ENCODE measurements at regions of chr3 and their contacts with region 1.

Region 1: DNA sequence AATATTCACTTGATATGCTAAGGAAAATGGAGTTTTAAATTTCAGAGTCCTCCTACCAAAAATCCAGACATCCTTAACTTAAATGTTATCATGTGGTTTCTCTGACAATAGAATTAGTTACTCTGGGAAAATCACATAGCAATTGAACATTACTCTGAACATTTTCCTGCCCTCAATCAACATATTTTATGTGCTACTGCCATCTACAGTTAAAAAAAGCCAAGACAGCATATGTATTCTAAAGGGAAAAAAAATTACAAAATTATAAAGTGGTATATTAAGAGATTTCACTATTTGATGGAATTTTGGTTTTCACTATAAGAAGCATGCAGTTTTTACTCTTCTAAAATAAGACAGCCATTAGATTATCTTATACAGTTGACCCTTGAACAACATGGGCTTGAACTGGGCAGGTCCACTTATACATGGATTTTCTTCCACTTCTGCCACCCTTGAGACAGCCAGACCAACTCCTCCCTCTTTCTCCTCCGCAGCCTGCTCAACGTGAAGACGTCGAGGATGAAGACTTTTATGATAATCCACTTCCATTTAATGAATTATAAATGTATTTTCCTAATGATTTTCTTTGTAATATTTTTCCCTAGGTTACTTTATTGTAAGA is 122.3 kb downstream of the ATP1B3 start:
- DNase-seq: no peak
- H3K4me3 ChIP-seq: no peak overlapping the region
- H3K27ac ChIP-seq: no peak overlapping the region
- H3K4me1 ChIP-seq: peaks cover 2% of the 10 kb centered on the region
- H3K27me3 ChIP-seq: no peaks in the 10 kb centered on the region
- CTCF ChIP-seq: peak in 1 of 3 donors; percentile 17
- EP300 ChIP-seq: no peak
- POLR2A ChIP-seq: no peak

Region 2: DNA sequence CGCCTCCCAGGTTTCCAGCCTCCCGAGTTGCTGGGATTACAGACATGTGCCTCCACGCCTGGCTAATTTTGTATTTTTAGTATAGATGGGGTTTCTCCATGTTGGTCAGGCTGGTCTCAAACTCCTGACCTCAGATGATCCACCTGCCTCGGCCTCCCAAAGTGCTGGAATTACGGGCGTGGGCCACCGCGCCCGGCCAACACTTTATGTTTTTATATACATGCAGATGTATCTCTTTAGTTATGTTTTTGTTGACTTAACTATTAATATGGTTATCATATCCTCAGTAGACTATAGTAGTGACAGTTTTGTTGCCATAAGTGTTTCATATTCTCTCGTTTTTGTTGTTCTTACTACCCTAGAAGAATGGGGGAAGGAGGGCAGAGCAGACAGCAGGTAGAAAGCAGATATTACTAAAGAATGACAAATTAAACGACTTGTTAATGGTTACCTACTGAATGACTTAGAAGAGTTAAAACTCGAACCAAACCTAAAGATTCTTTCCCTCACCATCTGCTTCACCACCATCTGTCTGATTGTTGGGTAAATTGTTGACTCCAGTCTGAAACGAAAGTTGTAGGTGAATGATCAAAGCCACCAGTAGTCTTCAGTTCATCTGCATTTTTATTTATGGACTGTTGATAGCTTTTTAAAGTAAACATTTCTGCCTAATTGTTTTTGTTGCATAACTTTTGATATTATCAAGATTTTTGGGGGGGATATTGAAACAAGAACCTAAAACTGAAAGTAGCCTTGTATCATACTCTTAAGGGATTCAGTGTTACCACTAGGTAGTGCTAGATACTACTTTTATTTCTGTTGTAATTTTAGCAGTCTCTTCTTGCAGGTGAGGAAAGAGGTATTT is 422.7 kb before region 1 on chr3:
- intact Hi-C with region 1: loop called in 1 of 4 experiments (anchors 10 kb)
- DNase-seq: no peak
- H3K4me3 ChIP-seq: no peak overlapping the region
- H3K27ac ChIP-seq: no peak overlapping the region
- H3K4me1 ChIP-seq: no peaks in the 10 kb centered on the region
- H3K27me3 ChIP-seq: no peaks in the 10 kb centered on the region
- CTCF ChIP-seq: peak in 1 of 3 donors; percentile 36
- EP300 ChIP-seq: no peak
- POLR2A ChIP-seq: no peak

Region 3: GRCh38 chr3:141875374-141875892 is 123.3 kb before region 1 on chr3:
- intact Hi-C with region 1: loop called in 1 of 4 experiments (anchors 5 kb)
- DNase-seq: peak; percentile 77 to 86 (median 84)
- H3K4me3 ChIP-seq: peak overlapping the region; percentile 92
- H3K27ac ChIP-seq: peak overlapping the region; percentile 96 to 98
- H3K4me1 ChIP-seq: no peaks in the 10 kb centered on the region
- H3K27me3 ChIP-seq: no peaks in the 10 kb centered on the region
- CTCF ChIP-seq: peak; percentile 76 to 83 (median 77)
- EP300 ChIP-seq: no peak
- POLR2A ChIP-seq: no peak